ENCODE measurements at regions of chr2 and their contacts with region 1.

Region 1: GRCh38 chr2:112784199-112785189 is at the start of gene IL1A:
- DNase-seq: no peak
- total RNA-seq, gene IL1A: not detected

Region 2: GRCh38 chr2:112756207-112756606 is 28.3 kb before region 1 on chr2:
- intact Hi-C with region 1: loop called in 1 of 2 experiments (anchors 1 kb)
- DNase-seq: no peak

Region 3: GRCh38 chr2:112803691-112804521 is 19.4 kb after region 1 on chr2:
- intact Hi-C with region 1: no loop called
- DNase-seq: no peak